ENCODE measurements at regions of chrX and their contacts with region 1.

Region 1: GRCh38 chrX:77899081-77899828 is at the start of gene COX7B:
- DNase-seq: peak; percentile 75
- H3K4me3 ChIP-seq: peak within 1 kb of the TSS; percentile 44 to 71 (median 52)
- H3K27ac ChIP-seq: peak within 1 kb of the TSS; percentile 81 to 93 (median 92)
- H3K4me1 ChIP-seq: peaks cover 0 to 18% (median 6%) of the 10 kb centered on the region in 4 donors
- H3K27me3 ChIP-seq: no peaks in the 10 kb centered on the region
- CTCF ChIP-seq: peak in 4 of 5 experiments; percentile 16 to 30 (median 27)
- EP300 ChIP-seq: no peak
- POLR2A ChIP-seq: peak; percentile 90
- total RNA-seq, gene COX7B: 48.3 to 755 (median 441) TPM

Region 2: DNA sequence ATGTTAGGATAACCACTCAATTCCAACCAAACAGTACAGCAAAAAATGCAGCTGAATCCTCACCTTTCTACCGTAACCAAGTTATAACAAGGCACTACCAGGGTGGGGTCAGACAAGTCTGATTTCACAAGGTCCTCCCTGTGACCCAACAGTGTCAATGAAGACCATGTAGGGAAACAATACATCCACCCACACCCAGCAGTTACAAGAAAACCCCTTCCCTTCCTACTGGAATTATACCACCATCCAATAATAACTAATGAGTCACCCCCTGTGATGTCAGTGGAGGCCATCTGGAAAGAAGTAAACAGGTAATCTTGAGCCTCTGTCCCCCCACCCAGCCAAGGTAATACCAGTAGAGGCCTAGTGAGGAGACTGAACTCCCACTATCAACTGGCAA is 334.4 kb before region 1 on chrX:
- in situ Hi-C with region 1: no loop called
- intact Hi-C with region 1: no loop called
- DNase-seq: no peak
- H3K4me3 ChIP-seq: no peak overlapping the region
- H3K27ac ChIP-seq: no peak overlapping the region
- H3K4me1 ChIP-seq: no peaks in the 10 kb centered on the region
- H3K27me3 ChIP-seq: no peaks in the 10 kb centered on the region
- CTCF ChIP-seq: no peak
- EP300 ChIP-seq: no peak
- POLR2A ChIP-seq: no peak

Region 3: GRCh38 chrX:77628294-77629025 is 270.8 kb before region 1 on chrX:
- in situ Hi-C with region 1: loop called in 1 of 4 experiments (anchors 25 kb)
- intact Hi-C with region 1: no loop called
- DNase-seq: no peak
- H3K4me3 ChIP-seq: no peak overlapping the region
- H3K27ac ChIP-seq: no peak overlapping the region
- H3K4me1 ChIP-seq: no peaks in the 10 kb centered on the region
- H3K27me3 ChIP-seq: no peaks in the 10 kb centered on the region
- CTCF ChIP-seq: no peak
- EP300 ChIP-seq: no peak
- POLR2A ChIP-seq: no peak

Region 4: GRCh38 chrX:77785486-77786364 is 113.5 kb before region 1 on chrX and contains the start of gene ATRX:
- in situ Hi-C with region 1: loop called in 1 of 4 experiments (anchors 10 kb)
- intact Hi-C with region 1: no loop called
- DNase-seq: peak; percentile 74
- H3K4me3 ChIP-seq: peak within 1 kb of the TSS; percentile 34 to 75 (median 55)
- H3K27ac ChIP-seq: peak within 1 kb of the TSS; percentile 87 to 95 (median 92)
- H3K4me1 ChIP-seq: peaks cover 0 to 11% (median 1%) of the 10 kb centered on the region in 4 donors
- H3K27me3 ChIP-seq: no peaks in the 10 kb centered on the region
- CTCF ChIP-seq: no peak
- EP300 ChIP-seq: no peak
- POLR2A ChIP-seq: peak; percentile 58
- total RNA-seq, gene ATRX: 57.9 to 547 (median 74.5) TPM

Region 5: DNA sequence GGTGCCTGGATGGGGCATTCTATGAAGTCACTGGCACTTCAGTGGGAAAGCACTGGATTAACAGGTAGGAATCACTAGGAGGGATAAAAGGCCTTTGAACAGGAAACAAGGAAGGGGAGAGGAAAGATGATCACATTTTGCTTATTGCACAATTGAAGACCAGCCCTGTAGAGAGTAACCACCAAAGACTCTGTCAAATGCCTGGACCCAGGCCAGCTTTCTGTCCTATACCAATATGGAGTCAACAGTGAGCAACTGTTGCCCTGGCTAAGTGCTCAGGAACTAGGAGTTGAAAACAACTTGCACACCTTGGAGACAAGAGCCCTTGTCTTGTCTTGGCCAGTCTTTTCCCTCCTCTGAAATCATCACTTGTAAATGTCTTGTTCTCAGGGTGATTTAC is 774.0 kb after region 1 on chrX:
- in situ Hi-C with region 1: no loop called
- intact Hi-C with region 1: no loop called
- DNase-seq: no peak
- H3K4me3 ChIP-seq: no peak overlapping the region
- H3K27ac ChIP-seq: no peak overlapping the region
- H3K4me1 ChIP-seq: no peaks in the 10 kb centered on the region
- H3K27me3 ChIP-seq: no peaks in the 10 kb centered on the region
- CTCF ChIP-seq: no peak
- EP300 ChIP-seq: no peak
- POLR2A ChIP-seq: no peak

Measured in transverse colon (tissue), 4 donors.